ENCODE measurements at regions of chr19 and their contacts with region 1.

Region 1: GRCh38 chr19:47231215-47231984 is 401 bp upstream of the BBC3 start:
- DNase-seq: peak; percentile 98
- H3K4me3 Mint-ChIP-seq: peak overlapping the region; percentile 84
- H3K27ac Mint-ChIP-seq: peak overlapping the region; percentile 87
- H3K4me1 Mint-ChIP-seq: peaks cover 23% of the 10 kb centered on the region
- H3K27me3 Mint-ChIP-seq: peaks cover 2% of the 10 kb centered on the region

Region 2: GRCh38 chr19:47152224-47153017 is 79.0 kb before region 1 on chr19:
- intact Hi-C with region 1: loop called (anchors 1 kb)
- DNase-seq: no peak
- H3K4me3 Mint-ChIP-seq: no peak overlapping the region
- H3K27ac Mint-ChIP-seq: peak overlapping the region; percentile 39
- H3K4me1 Mint-ChIP-seq: peaks cover 47% of the 10 kb centered on the region
- H3K27me3 Mint-ChIP-seq: no peaks in the 10 kb centered on the region

Region 3: GRCh38 chr19:47197141-47197540 is 34.3 kb before region 1 on chr19:
- intact Hi-C with region 1: no loop called
- DNase-seq: no peak
- H3K4me3 Mint-ChIP-seq: no peak overlapping the region
- H3K27ac Mint-ChIP-seq: no peak overlapping the region
- H3K4me1 Mint-ChIP-seq: peaks cover 7% of the 10 kb centered on the region
- H3K27me3 Mint-ChIP-seq: no peaks in the 10 kb centered on the region

Region 4: GRCh38 chr19:47210689-47211316 is 20.6 kb before region 1 on chr19:
- intact Hi-C with region 1: loop called (anchors 2 kb)
- DNase-seq: peak; percentile 94
- H3K4me3 Mint-ChIP-seq: no peak overlapping the region
- H3K27ac Mint-ChIP-seq: peak overlapping the region; percentile 61
- H3K4me1 Mint-ChIP-seq: peaks cover 8% of the 10 kb centered on the region
- H3K27me3 Mint-ChIP-seq: no peaks in the 10 kb centered on the region

Region 5: DNA sequence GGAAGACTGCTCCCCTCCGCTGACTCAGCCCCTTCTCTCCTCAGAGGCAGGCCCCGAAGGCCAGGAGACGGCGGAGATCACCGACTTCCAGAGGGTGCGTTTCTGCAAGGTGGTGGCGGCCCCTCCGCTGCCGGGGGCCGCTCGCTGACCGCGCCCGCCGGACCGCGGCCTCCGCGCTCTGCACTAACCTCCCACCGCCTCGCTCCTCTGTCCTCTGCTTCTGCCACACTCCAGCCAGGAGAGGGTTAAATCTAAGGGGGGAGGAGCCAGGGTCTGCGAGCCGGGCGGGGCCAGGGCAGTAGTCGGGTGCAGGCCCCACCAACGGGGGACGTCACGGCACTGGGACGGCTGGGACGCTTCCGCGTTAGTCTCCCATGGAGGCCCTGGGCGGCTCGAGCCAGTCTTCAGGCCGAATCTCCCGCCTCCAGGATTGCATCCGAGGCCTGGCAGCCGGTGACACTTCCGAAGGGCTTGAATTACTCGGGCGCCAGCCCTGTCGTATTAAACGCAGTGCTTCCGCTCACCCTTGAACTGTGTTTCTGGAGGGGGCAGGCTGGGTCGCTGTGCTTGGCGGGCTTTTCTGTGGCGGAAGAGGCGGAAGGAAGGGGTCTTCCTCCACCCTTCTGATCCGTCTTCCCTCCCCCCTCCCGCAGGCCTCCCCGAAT is 42.0 kb after region 1 on chr19:
- intact Hi-C with region 1: loop called (anchors 2 kb)
- DNase-seq: peak; percentile 98
- H3K4me3 Mint-ChIP-seq: peak overlapping the region; percentile 97
- H3K27ac Mint-ChIP-seq: peak overlapping the region; percentile 99
- H3K4me1 Mint-ChIP-seq: peaks cover 41% of the 10 kb centered on the region
- H3K27me3 Mint-ChIP-seq: no peaks in the 10 kb centered on the region

Region 6: GRCh38 chr19:47406711-47407416 is 175.5 kb after region 1 on chr19:
- intact Hi-C with region 1: no loop called
- DNase-seq: peak; percentile 75
- H3K4me3 Mint-ChIP-seq: no peak overlapping the region
- H3K27ac Mint-ChIP-seq: no peak overlapping the region
- H3K4me1 Mint-ChIP-seq: no peaks in the 10 kb centered on the region
- H3K27me3 Mint-ChIP-seq: peaks cover 29% of the 10 kb centered on the region